Astrocyte of the cerebellum (primary cell): ENCODE measurements at regions of chr20 and their contacts with region 1.

Region 1: GRCh38 chr20:54086483-54087039 is 16.2 kb upstream of the BCAS1 start:
- DNase-seq: no peak
- H3K4me3 ChIP-seq: no peak overlapping the region
- CTCF ChIP-seq: no peak

Region 2: GRCh38 chr20:54140927-54141566 is 54.5 kb after region 1 on chr20:
- in situ Hi-C with region 1: no loop called
- DNase-seq: peak; percentile 65
- H3K4me3 ChIP-seq: no peak overlapping the region
- CTCF ChIP-seq: no peak

Region 3: DNA sequence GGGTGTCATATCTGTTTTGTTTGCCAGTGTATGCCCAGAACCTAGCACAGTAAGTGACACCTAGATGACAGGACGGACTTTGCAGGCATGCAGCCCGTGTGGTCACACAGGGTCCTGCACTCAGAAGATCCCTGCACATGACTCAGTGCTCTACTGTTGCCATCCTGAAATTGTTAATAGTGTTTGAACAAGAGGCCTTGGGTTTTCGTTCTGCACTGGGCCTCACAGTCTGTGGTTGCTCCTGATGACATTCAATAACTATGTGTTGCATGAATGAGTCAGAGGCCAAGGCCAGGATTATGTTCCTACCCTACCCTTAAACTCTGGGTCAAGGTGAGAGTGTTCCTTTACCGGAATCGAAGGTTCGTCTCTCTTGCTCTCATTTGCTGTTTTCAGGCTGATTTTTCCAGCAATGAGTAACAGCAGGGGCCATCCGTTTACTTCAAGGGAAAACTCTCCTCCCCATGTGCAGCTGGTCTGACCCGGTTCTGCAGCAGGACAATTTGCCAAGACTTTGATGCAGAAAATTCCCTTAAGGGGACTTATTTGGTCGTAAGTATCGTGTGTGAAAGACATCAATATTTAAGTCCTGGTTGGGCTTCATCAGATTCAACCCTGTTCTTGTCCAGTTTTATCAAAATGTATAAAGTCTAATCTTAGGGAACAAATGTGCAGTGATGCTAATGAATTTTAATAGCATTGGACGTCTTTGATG is 108.3 kb after region 1 on chr20:
- in situ Hi-C with region 1: loop called (anchors 5 kb)
- DNase-seq: no peak
- H3K4me3 ChIP-seq: no peak overlapping the region
- CTCF ChIP-seq: no peak